Panc1 (cell line): ENCODE measurements at regions of chr20 and their contacts with region 1.

Region 1: GRCh38 chr20:47691625-47692024 is 93.7 kb downstream of the SULF2 start:
- DNase-seq: no peak
- ATAC-seq: no peak
- H3K4me3 ChIP-seq: no peak overlapping the region
- H3K27ac ChIP-seq: no peak overlapping the region
- H3K4me1 ChIP-seq: no peaks in the 10 kb centered on the region
- H3K27me3 ChIP-seq: no peaks in the 10 kb centered on the region
- CTCF ChIP-seq: no peak

Region 2: GRCh38 chr20:48419186-48419585 is 727.6 kb after region 1 on chr20:
- CTCF ChIA-PET with region 1: interaction called, 16 read pairs
- POLR2A ChIA-PET with region 1: no interaction called
- in situ Hi-C with region 1: no loop called
- intact Hi-C with region 1: no loop called
- DNase-seq: no peak
- ATAC-seq: no peak
- H3K4me3 ChIP-seq: no peak overlapping the region
- H3K27ac ChIP-seq: no peak overlapping the region
- H3K4me1 ChIP-seq: no peaks in the 10 kb centered on the region
- H3K27me3 ChIP-seq: peaks cover 18% of the 10 kb centered on the region
- CTCF ChIP-seq: no peak